ENCODE measurements at regions of chr17 and their contacts with region 1.

Region 1: DNA sequence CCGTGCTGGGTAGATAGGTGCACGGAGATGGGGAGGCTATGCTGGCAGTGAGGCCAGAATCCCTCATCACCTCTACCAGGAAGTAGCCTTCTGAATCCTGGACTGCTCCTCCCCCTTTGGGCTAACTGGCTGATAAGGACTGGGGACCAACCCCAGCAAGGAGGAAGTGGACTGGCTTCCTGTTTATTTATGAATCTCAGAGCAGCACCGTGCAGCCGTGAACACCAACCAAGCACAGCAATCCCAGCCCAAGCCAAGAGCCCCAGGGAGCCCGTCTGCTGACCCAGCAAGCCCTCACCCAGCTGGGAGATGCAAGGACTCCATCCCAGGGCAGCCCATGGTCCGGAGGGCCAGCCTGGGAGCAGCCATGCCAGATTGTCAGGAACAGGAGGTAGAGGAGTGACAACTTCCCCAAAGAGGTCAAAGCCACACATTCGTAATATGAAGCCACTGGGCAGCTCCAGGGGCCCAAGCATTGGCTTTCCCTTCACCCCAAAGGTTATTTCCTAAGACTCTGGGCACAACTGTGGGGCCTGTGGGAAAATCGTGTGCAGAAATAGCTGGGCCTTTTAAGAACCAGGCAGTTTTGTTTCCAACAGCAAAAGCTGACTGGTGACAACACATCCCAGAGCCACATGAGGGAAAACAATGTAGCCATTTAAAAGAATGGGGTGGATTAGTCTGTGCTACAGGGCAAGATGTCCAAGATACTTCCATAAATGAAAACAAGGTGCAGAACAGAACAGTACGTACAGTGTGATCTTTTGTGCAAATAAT is 23.9 kb downstream of the PHB1 start:
- DNase-seq: peak; percentile 29
- H3K4me3 ChIP-seq: no peak overlapping the region
- H3K27ac ChIP-seq: peak overlapping the region; percentile 33
- H3K4me1 ChIP-seq: peaks cover 19% of the 10 kb centered on the region
- H3K27me3 ChIP-seq: no peaks in the 10 kb centered on the region
- CTCF ChIP-seq: no peak
- POLR2A ChIP-seq: no peak

Region 2: DNA sequence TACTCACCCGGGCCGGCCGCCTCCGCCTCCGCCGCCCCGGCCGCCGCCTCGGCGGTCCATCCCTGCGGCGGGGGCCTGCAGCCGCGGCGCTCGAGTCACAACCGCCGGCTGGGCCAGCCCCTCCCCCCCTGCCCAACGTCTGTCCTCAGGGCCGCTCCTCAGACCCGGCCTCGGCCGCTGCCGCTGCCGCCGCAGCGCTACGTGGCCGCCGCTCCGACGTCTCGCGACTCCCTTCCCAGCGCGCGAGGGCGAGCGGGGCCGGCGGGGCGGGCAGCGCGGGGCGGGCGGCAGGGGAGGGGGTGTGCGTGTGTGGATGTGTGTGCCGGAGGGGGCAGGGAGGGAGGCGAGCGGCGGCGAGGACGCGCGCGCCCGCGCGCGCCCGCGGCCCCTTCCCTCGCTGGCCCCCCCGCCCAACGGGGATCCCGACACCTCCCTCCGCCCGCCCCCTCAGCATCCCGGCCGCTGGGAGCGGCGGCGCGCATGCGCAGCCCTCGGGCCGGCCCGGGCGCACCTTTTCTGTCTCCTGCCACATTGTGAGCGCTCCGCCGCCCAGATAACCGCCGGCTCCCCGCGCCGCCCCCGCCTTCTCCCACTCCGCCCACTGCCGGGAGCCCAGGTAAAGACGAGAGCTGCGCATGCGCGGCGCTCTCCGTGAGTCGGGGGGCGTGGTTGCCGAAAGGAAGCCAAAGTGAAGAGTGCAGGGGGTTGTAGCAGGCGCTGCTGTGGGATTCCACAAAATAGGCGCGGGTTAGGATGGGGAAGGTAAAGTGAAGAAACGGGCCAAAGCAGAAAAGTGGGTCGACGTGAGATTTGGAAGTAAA is 28.6 kb before region 1 on chr17 and contains the start of gene ZNF652:
- CTCF ChIA-PET with region 1: interaction called, 3 read pairs
- POLR2A ChIA-PET with region 1: no interaction called
- dilution Hi-C with region 1: no loop called
- intact Hi-C with region 1: loop called (anchors 2 kb)
- DNase-seq: peak; percentile 86
- H3K4me3 ChIP-seq: peak within 1 kb of the TSS; percentile 68 to 75 (median 70)
- H3K27ac ChIP-seq: peak within 1 kb of the TSS; percentile 34
- H3K4me1 ChIP-seq: peaks cover 19% of the 10 kb centered on the region
- H3K27me3 ChIP-seq: no peaks in the 10 kb centered on the region
- CTCF ChIP-seq: no peak
- POLR2A ChIP-seq: no peak
- total RNA-seq, gene ZNF652: 18.2 and 18.6 TPM in 2 replicates

Region 3: GRCh38 chr17:49370971-49371834 is 19.5 kb before region 1 on chr17:
- CTCF ChIA-PET with region 1: interaction called, 13 read pairs
- POLR2A ChIA-PET with region 1: no interaction called
- dilution Hi-C with region 1: no loop called
- intact Hi-C with region 1: no loop called
- DNase-seq: no peak
- H3K4me3 ChIP-seq: no peak overlapping the region
- H3K27ac ChIP-seq: no peak overlapping the region
- H3K4me1 ChIP-seq: no peaks in the 10 kb centered on the region
- H3K27me3 ChIP-seq: no peaks in the 10 kb centered on the region
- CTCF ChIP-seq: no peak
- POLR2A ChIP-seq: no peak